Psoas muscle (tissue), 8 donors: ENCODE measurements at regions of chr10 and their contacts with region 1.

Region 1: GRCh38 chr10:62048919-62049623 is 147.6 kb downstream of the ARID5B start:
- DNase-seq: peak; percentile 89 to 96
- ATAC-seq: peak; percentile 78 to 91 (median 87)
- H3K4me3 ChIP-seq: peak overlapping the region; percentile 83
- H3K27ac ChIP-seq: peak overlapping the region; percentile 98
- H3K4me1 ChIP-seq: peaks cover 35% of the 10 kb centered on the region
- H3K27me3 ChIP-seq: no peaks in the 10 kb centered on the region
- CTCF ChIP-seq: no peak

Region 2: DNA sequence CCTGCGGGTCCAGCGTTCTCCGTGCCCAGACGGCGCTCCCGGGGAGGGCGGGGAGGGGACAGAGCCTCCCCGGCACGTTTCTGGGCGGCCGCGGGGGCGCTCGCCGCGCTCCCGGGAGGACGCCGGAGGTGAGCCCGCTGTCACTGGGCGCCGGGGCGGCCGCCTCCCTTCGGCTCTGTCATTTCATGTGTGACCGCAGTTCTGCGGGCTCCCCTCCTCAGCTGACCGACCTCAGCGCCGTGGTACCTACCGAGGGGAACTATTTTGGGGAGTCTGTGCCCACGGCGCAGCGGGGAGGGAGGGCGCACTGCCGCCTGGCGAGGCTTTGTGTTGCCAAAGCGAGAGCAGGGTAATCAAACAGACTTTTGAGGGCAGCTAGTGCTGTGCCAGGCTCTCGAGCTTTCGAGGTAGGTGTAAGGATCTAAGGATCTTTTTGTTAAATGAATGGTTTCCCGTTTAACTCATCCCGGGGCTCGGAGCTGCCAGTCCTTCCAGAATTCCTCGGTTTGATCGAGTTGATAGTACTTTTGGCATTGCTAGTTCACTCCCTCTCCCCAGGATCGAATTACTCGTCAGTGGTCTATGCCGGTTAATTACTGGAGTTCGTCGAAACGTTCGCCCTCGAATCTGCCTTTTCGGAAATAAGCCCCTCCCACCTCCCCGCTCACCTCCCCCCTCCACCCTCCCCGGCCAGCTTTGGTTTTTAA is 145.7 kb before region 1 on chr10:
- intact Hi-C with region 1: loop called in 1 of 2 experiments (anchors 2 kb)
- DNase-seq: peak; percentile 61 to 76
- ATAC-seq: peak; percentile 71 to 83 (median 80)
- H3K4me3 ChIP-seq: peak overlapping the region; percentile 98
- H3K27ac ChIP-seq: peak overlapping the region; percentile 98
- H3K4me1 ChIP-seq: peaks cover 22% of the 10 kb centered on the region
- H3K27me3 ChIP-seq: no peaks in the 10 kb centered on the region
- CTCF ChIP-seq: peak; percentile 30

Region 3: GRCh38 chr10:62063795-62064472 is 14.9 kb after region 1 on chr10:
- intact Hi-C with region 1: loop called in 1 of 2 experiments (anchors 2 kb)
- DNase-seq: no peak
- ATAC-seq: peak; percentile 71 to 91 (median 89)
- H3K4me3 ChIP-seq: peak overlapping the region; percentile 13
- H3K27ac ChIP-seq: peak overlapping the region; percentile 98
- H3K4me1 ChIP-seq: peaks cover 72% of the 10 kb centered on the region
- H3K27me3 ChIP-seq: no peaks in the 10 kb centered on the region
- CTCF ChIP-seq: no peak

Region 4: GRCh38 chr10:62082729-62083411 is 33.8 kb after region 1 on chr10:
- intact Hi-C with region 1: loop called in 1 of 2 experiments (anchors 5 kb)
- DNase-seq: no peak
- ATAC-seq: peak in 2 of 4 donors; percentile 19 to 41
- H3K4me3 ChIP-seq: peak overlapping the region; percentile 40
- H3K27ac ChIP-seq: peak overlapping the region; percentile 82
- H3K4me1 ChIP-seq: peaks cover 69% of the 10 kb centered on the region
- H3K27me3 ChIP-seq: no peaks in the 10 kb centered on the region
- CTCF ChIP-seq: no peak

Region 5: GRCh38 chr10:62095181-62096071 is 46.4 kb after region 1 on chr10:
- intact Hi-C with region 1: loop called in 1 of 2 experiments (anchors 10 kb)
- DNase-seq: no peak
- ATAC-seq: no peak
- H3K4me3 ChIP-seq: no peak overlapping the region
- H3K27ac ChIP-seq: peak overlapping the region; percentile 56
- H3K4me1 ChIP-seq: peaks cover 21% of the 10 kb centered on the region
- H3K27me3 ChIP-seq: no peaks in the 10 kb centered on the region
- CTCF ChIP-seq: no peak